AG04450 (cell line): ENCODE measurements at regions of chr14 and their contacts with region 1.

Region 1: GRCh38 chr14:81453166-81453766 is 53.1 kb upstream of the STON2 start:
- DNase-seq: no peak
- H3K4me3 ChIP-seq: no peak overlapping the region
- H3K27ac ChIP-seq: no peak overlapping the region
- H3K27me3 ChIP-seq: peaks cover 7% of the 10 kb centered on the region
- CTCF ChIP-seq: peak; percentile 83

Region 2: GRCh38 chr14:81220830-81221578 is 232.3 kb before region 1 on chr14 and contains the start of gene GTF2A1:
- CTCF ChIA-PET with region 1: interaction called, 13 read pairs
- POLR2A ChIA-PET with region 1: interaction called, 4 read pairs
- DNase-seq: peak; percentile 90
- H3K4me3 ChIP-seq: peak within 1 kb of the TSS; percentile 89
- H3K27ac ChIP-seq: peak within 1 kb of the TSS; percentile 100
- H3K27me3 ChIP-seq: no peaks in the 10 kb centered on the region
- CTCF ChIP-seq: no peak
- polyA plus RNA-seq, gene GTF2A1: 22.9 and 24.5 TPM in 2 replicates

Region 3: GRCh38 chr14:81269100-81269978 is 183.9 kb before region 1 on chr14:
- CTCF ChIA-PET with region 1: interaction called, 116 read pairs
- POLR2A ChIA-PET with region 1: no interaction called
- DNase-seq: peak; percentile 39
- H3K4me3 ChIP-seq: no peak overlapping the region
- H3K27ac ChIP-seq: no peak overlapping the region
- H3K27me3 ChIP-seq: peaks cover 4% of the 10 kb centered on the region
- CTCF ChIP-seq: peak; percentile 76

Region 4: GRCh38 chr14:81440041-81440440 is 13.2 kb before region 1 on chr14:
- CTCF ChIA-PET with region 1: interaction called, 11 read pairs
- POLR2A ChIA-PET with region 1: no interaction called
- DNase-seq: no peak
- H3K4me3 ChIP-seq: no peak overlapping the region
- H3K27ac ChIP-seq: no peak overlapping the region
- H3K27me3 ChIP-seq: peaks cover 34% of the 10 kb centered on the region
- CTCF ChIP-seq: no peak

Region 5: DNA sequence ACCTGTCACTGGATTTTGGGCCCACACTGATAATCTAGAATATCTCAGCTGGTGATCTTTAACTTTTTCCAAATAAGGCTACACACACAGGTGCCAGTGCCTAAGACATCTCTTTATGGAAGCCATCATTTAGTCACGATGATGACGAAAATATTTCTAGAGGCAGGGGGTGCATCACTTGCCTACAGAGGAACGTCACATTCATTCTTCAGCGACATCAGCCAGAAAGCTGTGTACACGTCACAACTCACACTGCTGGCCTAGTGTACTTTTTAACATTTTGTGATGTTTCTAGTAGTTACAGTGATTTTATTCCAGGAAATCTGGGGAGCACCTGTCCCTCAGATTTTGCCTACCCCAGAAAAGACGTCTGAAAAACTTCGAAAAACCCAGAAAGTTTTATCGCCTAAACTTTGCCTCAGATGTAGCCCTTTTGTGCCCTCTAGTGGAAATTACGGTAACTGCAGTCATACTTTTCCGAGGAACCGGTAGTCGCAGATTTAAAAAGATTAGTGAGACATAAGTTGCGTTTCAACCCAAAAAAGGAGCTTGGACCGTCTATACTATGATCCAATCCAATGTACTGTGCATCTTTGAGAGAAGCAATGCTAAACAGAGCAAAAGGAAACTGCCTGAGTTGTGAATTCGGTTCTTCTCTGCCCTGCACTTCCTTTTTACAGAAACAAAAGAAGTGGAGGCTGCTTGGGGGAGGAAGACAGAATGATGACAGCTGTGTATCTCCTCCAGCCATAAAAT is 11.2 kb after region 1 on chr14:
- CTCF ChIA-PET with region 1: interaction called, 66 read pairs
- POLR2A ChIA-PET with region 1: no interaction called
- DNase-seq: peak; percentile 30
- H3K4me3 ChIP-seq: peak overlapping the region; percentile 62
- H3K27ac ChIP-seq: no peak overlapping the region
- H3K27me3 ChIP-seq: no peaks in the 10 kb centered on the region
- CTCF ChIP-seq: peak; percentile 88

Region 6: GRCh38 chr14:81728447-81728846 is 275.2 kb after region 1 on chr14:
- CTCF ChIA-PET with region 1: no interaction called
- POLR2A ChIA-PET with region 1: no interaction called
- DNase-seq: no peak
- H3K4me3 ChIP-seq: no peak overlapping the region
- H3K27ac ChIP-seq: no peak overlapping the region
- H3K27me3 ChIP-seq: no peaks in the 10 kb centered on the region
- CTCF ChIP-seq: no peak